Left colon (tissue), 2 donors: ENCODE measurements at regions of chr14 and their contacts with region 1.

Region 1: DNA sequence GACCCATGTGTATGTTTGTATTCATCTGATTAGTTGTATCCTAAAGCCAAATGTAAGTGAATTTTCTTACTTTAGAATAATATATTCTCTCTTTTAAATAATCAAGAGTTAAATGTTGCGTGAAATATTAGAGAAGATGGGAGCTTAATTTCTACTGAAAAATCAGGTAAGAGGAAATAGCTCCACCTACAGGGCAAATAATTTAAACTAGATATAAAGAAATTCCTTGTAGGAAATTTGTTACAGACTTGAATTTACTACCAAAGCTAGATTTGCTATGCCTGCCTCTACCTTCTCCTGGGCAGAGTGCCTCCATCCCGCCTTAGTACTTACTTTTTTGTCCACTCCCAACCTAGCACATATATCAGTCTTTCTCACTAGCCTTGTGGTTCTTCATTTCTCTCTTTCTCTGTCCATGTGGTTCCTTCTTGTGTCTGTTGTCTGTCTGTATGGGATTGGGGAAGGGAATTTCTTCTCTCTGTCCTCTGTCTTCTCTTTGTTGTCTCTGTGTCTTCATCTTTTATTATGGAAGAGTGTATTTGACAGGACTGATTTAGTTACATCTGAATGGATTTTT is 44.7 kb downstream of the PALS1 start:
- DNase-seq: no peak
- ATAC-seq: peak; percentile 42

Region 2: DNA sequence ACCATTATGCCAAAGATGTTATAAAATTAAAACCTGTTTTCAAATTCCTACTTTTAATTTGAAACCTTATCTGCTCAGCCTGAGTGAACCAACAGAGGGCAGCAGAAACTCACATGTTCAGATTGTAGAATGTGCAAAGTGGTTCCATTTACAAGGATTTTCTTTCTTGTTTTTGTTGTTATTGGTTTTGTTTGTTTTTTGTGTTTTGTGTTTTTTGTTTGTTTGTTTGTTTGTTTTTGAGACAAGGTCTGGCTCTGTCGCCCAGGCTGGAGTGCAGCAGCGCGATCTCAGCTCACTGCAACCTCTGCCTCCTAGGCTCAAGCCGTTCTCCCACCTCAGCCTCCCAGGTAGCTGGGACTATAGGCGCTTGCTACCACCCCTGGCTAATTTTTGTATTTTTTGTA is 119.5 kb before region 1 on chr14:
- intact Hi-C with region 1: loop called (anchors 5 to 10 kb)
- DNase-seq: peak in 1 of 2 donors; percentile 50
- ATAC-seq: peak; percentile 33